Right cardiac atrium (tissue), 5 donors: ENCODE measurements at regions of chr19 and their contacts with region 1.

Region 1: GRCh38 chr19:18478569-18479311 is 40.8 kb upstream of the ISYNA1 start:
- DNase-seq: peak; percentile 84 to 86 (median 86)
- ATAC-seq: peak; percentile 70 to 77
- H3K4me3 ChIP-seq: no peak overlapping the region
- H3K27ac ChIP-seq: peak overlapping the region; percentile 16
- H3K4me1 ChIP-seq: peaks cover 33% of the 10 kb centered on the region
- H3K27me3 ChIP-seq: no peaks in the 10 kb centered on the region

Region 2: GRCh38 chr19:18562086-18562485 is 83.3 kb after region 1 on chr19:
- intact Hi-C with region 1: loop called in 1 of 4 experiments (anchors 10 kb)
- DNase-seq: peak; percentile 75 to 85 (median 83)
- ATAC-seq: peak; percentile 48 to 63
- H3K4me3 ChIP-seq: no peak overlapping the region
- H3K27ac ChIP-seq: peak overlapping the region; percentile 89
- H3K4me1 ChIP-seq: no peaks in the 10 kb centered on the region
- H3K27me3 ChIP-seq: no peaks in the 10 kb centered on the region